ENCODE measurements at regions of chr21 and their contacts with region 1.

Region 1: DNA sequence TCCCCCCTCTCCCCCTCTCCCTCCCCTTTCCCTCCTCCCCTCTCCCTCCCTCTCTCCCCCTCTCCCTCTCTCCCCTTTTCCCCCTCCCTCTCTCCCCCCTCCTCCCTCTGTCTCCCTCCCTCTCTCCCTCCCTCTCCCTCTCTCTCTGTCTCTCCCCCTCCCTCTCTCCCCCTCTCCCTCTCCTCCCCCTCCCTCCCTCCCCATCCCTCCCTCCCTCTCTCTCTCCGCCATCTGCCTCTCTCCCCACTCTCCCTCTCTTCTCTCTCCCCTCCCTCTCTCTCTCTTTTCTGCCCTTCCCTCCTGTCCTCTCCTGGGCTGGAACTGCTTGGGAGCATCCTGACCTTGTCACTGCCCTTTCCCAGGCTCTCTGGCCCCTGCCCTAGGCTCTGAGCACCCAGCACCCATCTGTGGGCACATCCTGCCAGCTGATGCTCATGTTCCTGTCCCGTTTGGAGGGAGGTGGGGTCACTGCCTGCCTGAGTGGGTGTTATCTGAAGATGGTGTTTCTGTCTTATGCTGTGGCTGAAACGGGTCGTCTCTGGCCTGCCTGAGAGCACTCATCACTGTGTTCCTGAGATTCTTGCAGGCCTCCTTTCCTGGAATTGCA is 10.8 kb downstream of the FTCD start:
- DNase-seq: peak; percentile 40
- ATAC-seq: no peak
- H3K4me3 Mint-ChIP-seq: no peak overlapping the region
- H3K27ac Mint-ChIP-seq: peak overlapping the region; percentile 34
- H3K4me1 Mint-ChIP-seq: peaks cover 12% of the 10 kb centered on the region
- H3K27me3 Mint-ChIP-seq: no peaks in the 10 kb centered on the region

Region 2: DNA sequence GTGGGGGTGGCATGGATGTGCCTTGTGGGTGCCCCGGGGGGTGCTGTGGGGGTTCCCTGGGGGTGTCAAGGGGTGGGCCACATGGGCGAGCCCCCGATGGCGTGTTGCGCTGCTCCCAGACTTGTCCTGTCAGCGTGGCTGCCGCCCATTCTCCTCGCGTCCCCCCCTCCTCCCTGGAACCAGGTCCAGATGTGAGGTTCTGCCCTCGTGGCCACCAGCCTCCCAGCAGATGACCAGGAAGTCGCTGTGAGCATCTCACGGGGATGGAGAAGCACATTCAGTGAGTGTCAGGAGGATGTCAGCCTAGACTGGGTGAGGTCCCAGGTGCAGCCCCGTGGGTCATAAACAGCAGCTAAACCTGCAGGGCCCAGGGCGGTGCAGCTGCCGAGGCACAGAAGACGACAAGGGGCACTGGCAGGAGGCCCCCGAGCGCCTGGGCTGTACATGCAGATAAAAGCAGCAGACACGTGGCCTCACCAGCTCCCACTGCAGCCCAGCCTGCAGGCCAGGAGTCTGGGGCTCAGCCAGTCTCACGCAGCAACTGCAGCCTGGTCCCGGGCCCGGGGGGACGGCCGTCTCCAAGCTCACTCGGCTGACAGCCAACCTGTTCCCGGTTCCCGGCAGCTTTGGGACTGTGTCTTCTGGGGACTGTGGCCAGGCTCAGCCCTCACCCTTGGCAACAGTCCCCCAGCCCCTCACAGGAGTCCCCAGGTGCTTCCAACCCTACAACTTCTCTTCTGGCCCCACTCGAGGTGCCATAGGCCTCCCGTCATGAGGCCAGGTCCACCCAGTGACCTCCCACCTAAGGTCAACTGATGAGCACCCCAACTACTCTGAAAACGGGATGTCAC is 64.2 kb before region 1 on chr21:
- CTCF ChIA-PET with region 1: no interaction called
- POLR2A ChIA-PET with region 1: no interaction called
- intact Hi-C with region 1: no loop called
- DNase-seq: no peak
- ATAC-seq: no peak
- H3K4me3 Mint-ChIP-seq: no peak overlapping the region
- H3K27ac Mint-ChIP-seq: no peak overlapping the region
- H3K4me1 Mint-ChIP-seq: no peaks in the 10 kb centered on the region
- H3K27me3 Mint-ChIP-seq: no peaks in the 10 kb centered on the region

Region 3: DNA sequence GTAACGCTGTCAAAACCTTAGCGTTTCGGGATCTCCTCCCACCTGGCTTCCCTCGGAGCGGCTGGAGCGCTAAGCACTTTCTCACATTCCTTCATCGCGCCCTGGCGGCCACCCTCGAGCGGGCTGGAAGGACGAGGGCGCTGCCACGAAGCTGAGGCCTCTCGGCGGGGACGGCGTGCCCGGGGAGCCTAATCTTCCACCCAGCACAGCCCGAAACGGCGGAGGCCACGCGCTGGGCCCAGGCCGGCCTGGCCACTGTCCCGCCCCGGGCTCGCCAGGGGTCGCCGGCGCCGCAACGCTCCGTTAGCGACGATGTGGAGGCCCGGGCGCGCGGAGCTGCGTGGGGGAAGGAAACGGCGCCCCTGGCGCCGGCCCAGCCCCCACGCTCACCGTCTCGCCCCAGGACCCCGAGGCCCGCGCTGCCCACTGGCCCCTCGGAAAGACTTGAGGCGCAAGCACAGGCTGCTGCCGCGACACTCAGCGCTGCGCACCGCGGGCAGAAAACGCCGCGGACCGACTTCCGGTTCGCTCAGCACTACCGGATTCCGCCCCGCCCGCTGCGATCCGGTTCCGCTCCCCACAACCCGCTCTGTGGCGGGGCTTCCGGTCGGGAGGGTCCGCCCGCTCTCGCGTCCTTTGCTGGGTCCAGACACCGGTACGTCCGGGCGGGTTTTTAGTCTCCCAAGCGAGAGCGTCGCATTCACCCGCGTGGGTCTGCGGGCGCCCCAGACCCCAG is 141.4 kb after region 1 on chr21 and contains the start of gene YBEY:
- CTCF ChIA-PET with region 1: interaction called, 9 read pairs
- POLR2A ChIA-PET with region 1: no interaction called
- intact Hi-C with region 1: loop called in 1 of 2 experiments (anchors 1 kb)
- DNase-seq: peak; percentile 94
- ATAC-seq: peak; percentile 94
- H3K4me3 Mint-ChIP-seq: peak within 1 kb of the TSS; percentile 88
- H3K27ac Mint-ChIP-seq: peak within 1 kb of the TSS; percentile 98
- H3K4me1 Mint-ChIP-seq: peaks cover 52% of the 10 kb centered on the region
- H3K27me3 Mint-ChIP-seq: no peaks in the 10 kb centered on the region
- total RNA-seq, gene YBEY: 16.9 to 20.6 TPM